ENCODE measurements at regions of chr1 and their contacts with region 1.

Region 1: GRCh38 chr1:109910123-109910962 is at the start of gene CSF1:
- DNase-seq: peak; percentile 64
- H3K4me3 Mint-ChIP-seq: peak within 1 kb of the TSS; percentile 94
- H3K27ac Mint-ChIP-seq: peak within 1 kb of the TSS; percentile 93
- H3K4me1 Mint-ChIP-seq: peaks cover 82% of the 10 kb centered on the region
- H3K27me3 Mint-ChIP-seq: no peaks in the 10 kb centered on the region
- total RNA-seq, gene CSF1: 89.4 to 94.2 TPM

Region 2: GRCh38 chr1:109773146-109773899 is 137.0 kb before region 1 on chr1:
- CTCF ChIA-PET with region 1: interaction called, 16 read pairs
- POLR2A ChIA-PET with region 1: interaction called, 5 read pairs
- DNase-seq: peak; percentile 79
- H3K4me3 Mint-ChIP-seq: no peak overlapping the region
- H3K27ac Mint-ChIP-seq: no peak overlapping the region
- H3K4me1 Mint-ChIP-seq: peaks cover 17% of the 10 kb centered on the region
- H3K27me3 Mint-ChIP-seq: peaks cover 7% of the 10 kb centered on the region

Region 3: GRCh38 chr1:109790735-109791494 is 119.4 kb before region 1 on chr1:
- CTCF ChIA-PET with region 1: interaction called, 23 read pairs
- POLR2A ChIA-PET with region 1: interaction called, 52 read pairs
- DNase-seq: peak; percentile 90
- H3K4me3 Mint-ChIP-seq: peak overlapping the region; percentile 21
- H3K27ac Mint-ChIP-seq: peak overlapping the region; percentile 95
- H3K4me1 Mint-ChIP-seq: peaks cover 92% of the 10 kb centered on the region
- H3K27me3 Mint-ChIP-seq: no peaks in the 10 kb centered on the region

Region 4: GRCh38 chr1:109796484-109797302 is 113.7 kb before region 1 on chr1:
- CTCF ChIA-PET with region 1: interaction called, 23 read pairs
- POLR2A ChIA-PET with region 1: interaction called, 62 read pairs
- DNase-seq: peak; percentile 23
- H3K4me3 Mint-ChIP-seq: peak overlapping the region; percentile 4
- H3K27ac Mint-ChIP-seq: peak overlapping the region; percentile 84
- H3K4me1 Mint-ChIP-seq: peaks cover 84% of the 10 kb centered on the region
- H3K27me3 Mint-ChIP-seq: no peaks in the 10 kb centered on the region

Region 5: DNA sequence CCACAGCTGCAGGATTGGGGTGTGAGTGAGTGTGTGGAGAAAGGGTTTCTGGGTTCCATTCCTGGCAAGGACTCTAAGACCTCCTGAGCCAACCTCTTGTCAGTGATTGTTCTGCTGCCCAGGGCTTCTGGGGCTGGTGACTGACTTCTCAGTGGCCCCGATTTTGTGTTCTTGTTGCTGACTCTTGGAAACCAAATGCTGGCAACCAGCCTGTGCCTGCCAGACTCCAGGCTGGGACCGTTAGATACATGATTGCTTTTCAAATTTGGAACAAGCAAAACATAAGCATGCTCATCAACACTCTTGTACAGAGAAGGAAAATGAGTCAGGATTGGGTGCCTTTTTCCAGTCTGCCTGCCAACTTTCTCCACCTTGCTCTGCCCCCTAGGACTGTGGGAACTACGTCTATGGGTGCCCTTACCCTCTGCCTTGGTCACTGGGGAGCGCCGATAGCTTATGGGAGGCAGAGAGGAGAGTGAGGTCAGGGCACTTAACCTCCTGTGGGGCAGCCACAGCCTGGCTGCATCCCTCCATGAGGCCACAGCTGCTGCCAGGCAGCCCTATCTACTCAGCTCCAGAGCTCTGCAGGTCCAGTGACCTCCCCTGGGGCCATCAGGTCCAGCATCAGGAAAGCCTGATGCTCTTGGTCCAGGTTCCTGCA is 107.3 kb before region 1 on chr1:
- CTCF ChIA-PET with region 1: interaction called, 6 read pairs
- POLR2A ChIA-PET with region 1: interaction called, 62 read pairs
- DNase-seq: no peak
- H3K4me3 Mint-ChIP-seq: peak overlapping the region; percentile 66
- H3K27ac Mint-ChIP-seq: peak overlapping the region; percentile 100
- H3K4me1 Mint-ChIP-seq: peaks cover 89% of the 10 kb centered on the region
- H3K27me3 Mint-ChIP-seq: no peaks in the 10 kb centered on the region

Region 6: GRCh38 chr1:109895720-109896504 is 14.4 kb before region 1 on chr1:
- CTCF ChIA-PET with region 1: no interaction called
- POLR2A ChIA-PET with region 1: interaction called, 15 read pairs
- DNase-seq: peak; percentile 43
- H3K4me3 Mint-ChIP-seq: no peak overlapping the region
- H3K27ac Mint-ChIP-seq: no peak overlapping the region
- H3K4me1 Mint-ChIP-seq: peaks cover 19% of the 10 kb centered on the region
- H3K27me3 Mint-ChIP-seq: no peaks in the 10 kb centered on the region

Region 7: DNA sequence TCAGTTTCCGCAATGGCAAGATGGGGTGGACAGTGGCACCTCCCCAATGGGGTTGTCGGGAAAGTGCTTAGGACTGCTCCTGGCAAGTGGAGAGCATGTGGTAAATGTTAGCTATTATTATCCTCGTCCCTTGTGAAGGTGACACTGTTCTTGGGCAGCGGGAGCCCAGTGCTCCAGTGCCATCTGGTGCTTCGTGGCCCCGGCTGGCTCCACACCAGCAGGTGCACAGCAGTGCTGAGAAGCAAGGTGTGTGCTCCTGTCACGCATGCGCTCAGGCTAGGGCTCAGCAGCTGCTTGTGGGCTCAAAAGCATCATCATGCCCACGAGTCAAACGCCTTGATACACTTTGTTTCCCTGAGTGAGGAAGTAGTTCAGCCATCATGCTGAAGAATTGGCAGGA is 274.8 kb after region 1 on chr1:
- CTCF ChIA-PET with region 1: no interaction called
- POLR2A ChIA-PET with region 1: no interaction called
- DNase-seq: no peak
- H3K4me3 Mint-ChIP-seq: no peak overlapping the region
- H3K27ac Mint-ChIP-seq: no peak overlapping the region
- H3K4me1 Mint-ChIP-seq: no peaks in the 10 kb centered on the region
- H3K27me3 Mint-ChIP-seq: peaks cover 32% of the 10 kb centered on the region